HCT116 (cell line): ENCODE measurements at regions of chr4 and their contacts with region 1.

Region 1: GRCh38 chr4:99808260-99808857 is 8.3 kb upstream of the DAPP1 start:
- DNase-seq: peak; percentile 63
- ATAC-seq: peak; percentile 98
- H3K4me3 ChIP-seq: no peak overlapping the region
- H3K27ac ChIP-seq: no peak overlapping the region
- H3K4me1 ChIP-seq: no peaks in the 10 kb centered on the region
- H3K27me3 ChIP-seq: peaks cover 5% of the 10 kb centered on the region; the same call in 1 of the 2 replicates
- CTCF ChIP-seq: peak; percentile 81 to 91 (median 89)
- POLR2A ChIP-seq: no peak
- RAD21 ChIP-seq: peak; percentile 94

Region 2: DNA sequence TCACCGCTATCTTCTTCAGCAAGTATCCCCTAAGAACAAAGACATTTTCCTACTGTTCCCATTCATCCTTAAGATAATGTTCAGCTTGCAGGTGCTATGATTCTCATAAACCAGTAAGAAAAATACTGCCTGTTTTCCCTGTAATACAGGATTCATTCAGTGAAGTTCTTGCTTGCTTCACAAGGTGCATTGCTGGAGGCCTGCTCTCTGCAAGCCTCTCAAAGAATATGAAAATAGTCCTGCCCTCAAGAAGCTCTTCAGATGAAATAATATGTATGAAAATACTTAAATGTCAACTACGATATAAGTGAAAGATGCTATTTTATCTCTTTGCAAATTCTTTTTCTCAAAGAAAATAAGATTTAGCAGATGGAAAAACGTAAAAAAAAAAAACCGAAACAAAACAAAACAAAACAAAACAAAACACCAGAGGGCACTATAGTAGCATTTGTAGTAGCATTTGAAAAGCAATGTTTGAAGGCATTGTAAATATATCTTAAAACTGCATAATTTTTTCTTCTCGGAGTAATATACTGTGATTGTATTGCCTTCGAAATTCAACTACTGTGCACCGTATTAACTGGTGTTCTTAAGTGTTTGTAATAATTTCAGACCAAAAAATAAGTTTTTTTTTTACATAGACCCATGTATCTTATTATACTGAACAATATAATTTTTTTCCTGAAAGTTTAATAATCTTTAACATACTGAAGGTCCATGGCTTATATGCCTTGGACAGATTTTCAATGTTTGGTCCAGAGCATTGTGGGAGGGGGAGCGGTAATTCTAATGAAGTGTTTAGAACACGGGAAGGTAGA is 690.3 kb before region 1 on chr4:
- CTCF ChIA-PET with region 1: no interaction called
- POLR2A ChIA-PET with region 1: no interaction called
- RAD21 ChIA-PET with region 1: no interaction called
- intact Hi-C with region 1: loop called (anchors 1 kb)
- DNase-seq: no peak
- ATAC-seq: no peak
- H3K4me3 ChIP-seq: no peak overlapping the region
- H3K27ac ChIP-seq: no peak overlapping the region
- H3K4me1 ChIP-seq: no peaks in the 10 kb centered on the region
- H3K27me3 ChIP-seq: no peaks in the 10 kb centered on the region
- CTCF ChIP-seq: peak; percentile 13 to 55 (median 40); a peak in 4 of 6 replicates
- POLR2A ChIP-seq: no peak
- RAD21 ChIP-seq: peak; percentile 52

Region 3: DNA sequence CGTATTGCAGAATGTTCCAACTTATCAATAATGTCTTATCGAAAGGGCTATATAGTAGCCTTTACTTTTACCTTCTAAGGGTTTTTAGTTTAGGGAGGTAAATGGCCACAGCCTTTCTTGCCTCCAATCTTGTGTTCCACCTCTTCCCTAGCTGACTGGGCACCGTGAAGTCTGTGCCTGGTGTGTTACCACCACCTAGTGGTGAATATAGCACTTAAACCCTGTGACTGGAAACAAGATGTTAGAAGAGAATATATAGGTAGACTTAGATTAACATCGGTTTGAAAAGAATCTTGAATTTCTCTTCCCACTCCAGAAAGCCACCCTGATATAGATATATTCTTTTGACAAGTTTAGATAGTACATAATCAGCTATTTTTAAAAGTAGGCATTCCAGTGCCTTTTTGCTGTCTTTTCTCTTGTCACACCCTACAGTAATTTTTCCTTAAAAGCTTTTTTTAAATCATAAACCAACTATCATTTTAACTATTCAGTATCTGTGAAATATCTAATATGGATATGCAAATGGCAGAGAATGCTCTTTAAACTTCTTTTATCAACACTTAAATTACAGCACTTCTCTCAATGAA is 345.4 kb before region 1 on chr4:
- CTCF ChIA-PET with region 1: interaction called, 19 read pairs
- POLR2A ChIA-PET with region 1: no interaction called
- RAD21 ChIA-PET with region 1: interaction called in 1 of 2 experiments, 6 read pairs
- intact Hi-C with region 1: loop called (anchors 5 kb)
- DNase-seq: peak; percentile 57
- ATAC-seq: peak; percentile 99
- H3K4me3 ChIP-seq: no peak overlapping the region
- H3K27ac ChIP-seq: no peak overlapping the region
- H3K4me1 ChIP-seq: peaks cover 0 to 5% of the 10 kb centered on the region in 2 experiments; a peak in 1 of 4 replicates
- H3K27me3 ChIP-seq: no peaks in the 10 kb centered on the region
- CTCF ChIP-seq: peak; percentile 79 to 92 (median 79)
- POLR2A ChIP-seq: no peak
- RAD21 ChIP-seq: peak; percentile 94

Region 4: GRCh38 chr4:99723612-99724011 is 84.7 kb before region 1 on chr4:
- CTCF ChIA-PET with region 1: interaction called, 18 read pairs
- POLR2A ChIA-PET with region 1: no interaction called
- RAD21 ChIA-PET with region 1: interaction called in 1 of 2 experiments, 4 read pairs
- intact Hi-C with region 1: loop called (anchors 5 kb)
- DNase-seq: peak; percentile 10
- ATAC-seq: peak; percentile 89
- H3K4me3 ChIP-seq: no peak overlapping the region
- H3K27ac ChIP-seq: no peak overlapping the region
- H3K4me1 ChIP-seq: peaks cover 0 to 16% of the 10 kb centered on the region in 2 experiments; a peak in 2 of 4 replicates
- H3K27me3 ChIP-seq: no peaks in the 10 kb centered on the region
- CTCF ChIP-seq: no peak
- POLR2A ChIP-seq: no peak
- RAD21 ChIP-seq: no peak

Region 5: DNA sequence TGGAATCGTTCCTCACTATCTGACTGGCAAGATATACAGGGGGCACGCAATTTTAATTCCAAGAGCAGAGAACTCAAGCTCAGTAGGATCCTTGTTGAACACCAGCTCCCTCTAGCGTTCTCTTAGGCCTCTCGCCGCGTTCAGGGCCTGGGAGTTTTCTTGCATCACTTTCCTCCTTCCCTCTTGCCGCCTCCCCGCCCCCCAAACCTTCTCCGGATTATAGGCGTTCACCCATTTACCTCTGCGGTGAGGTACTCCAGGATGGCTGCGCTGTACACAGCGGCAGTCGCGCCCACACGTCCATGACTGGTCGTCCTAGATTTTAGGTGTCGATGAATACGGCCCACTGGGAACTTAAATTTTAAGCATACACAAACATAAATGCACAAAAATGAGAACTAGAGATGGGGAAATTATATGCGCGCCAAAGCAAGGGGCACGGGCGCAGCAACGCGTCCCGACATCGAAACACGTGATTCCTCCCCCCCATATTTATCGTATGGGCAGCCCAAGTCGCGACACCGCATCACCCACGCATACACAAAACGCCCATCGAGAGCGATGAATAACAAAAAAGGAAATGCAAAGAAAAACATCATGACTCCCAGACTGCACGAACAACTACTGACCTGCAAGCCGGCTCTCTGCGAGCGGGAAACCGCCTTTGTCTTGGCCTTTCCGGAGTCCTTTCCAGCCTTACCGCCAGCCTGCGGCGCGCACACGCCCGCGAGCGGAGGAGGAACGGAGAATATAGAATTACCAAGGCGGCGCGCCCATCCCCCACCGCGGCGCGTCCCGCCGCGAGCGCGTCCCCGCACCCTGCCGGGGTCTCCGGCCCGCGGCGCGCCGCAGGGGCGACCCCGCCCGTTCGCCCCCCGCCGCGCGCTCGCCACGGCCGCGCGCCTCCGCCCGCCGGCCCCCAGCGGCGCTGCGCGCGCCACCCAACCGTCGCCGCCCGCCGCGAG is 141.0 kb after region 1 on chr4:
- CTCF ChIA-PET with region 1: interaction called, 6 read pairs
- POLR2A ChIA-PET with region 1: interaction called, 5 read pairs
- RAD21 ChIA-PET with region 1: no interaction called
- intact Hi-C with region 1: loop called (anchors 5 kb)
- DNase-seq: peak; percentile 91
- ATAC-seq: peak; percentile 23
- H3K4me3 ChIP-seq: peak overlapping the region; percentile 85 to 94
- H3K27ac ChIP-seq: peak overlapping the region; percentile 94
- H3K4me1 ChIP-seq: peaks cover 16 to 39% of the 10 kb centered on the region in 2 experiments; a peak in 3 of 4 replicates
- H3K27me3 ChIP-seq: no peaks in the 10 kb centered on the region
- CTCF ChIP-seq: peak in 2 of 3 experiments; percentile 83 to 87; a peak in 4 of 6 replicates
- POLR2A ChIP-seq: peak; percentile 25
- RAD21 ChIP-seq: no peak